ENCODE measurements at regions of chr2 and their contacts with region 1.

Region 1: DNA sequence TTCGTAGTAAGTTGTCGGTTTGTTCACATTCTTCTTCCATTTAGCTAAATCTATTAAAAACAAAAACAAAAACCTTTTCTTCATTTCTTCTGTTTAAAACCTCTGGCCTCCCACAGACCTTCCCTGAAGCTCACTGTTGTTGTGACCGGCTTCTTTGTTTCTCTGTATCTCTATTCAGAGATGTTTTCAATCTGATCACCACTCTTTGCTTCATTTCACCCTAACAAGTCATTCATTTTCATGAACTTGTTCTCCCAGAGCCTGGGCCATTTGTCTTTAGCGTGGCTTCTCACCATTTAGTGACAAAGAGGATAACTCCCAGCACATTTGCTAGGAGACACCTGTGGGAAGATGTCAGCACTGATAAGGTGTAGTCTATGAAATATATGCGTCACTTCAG is 794.2 kb downstream of the ERBB4 start:
- DNase-seq: no peak
- H3K27ac ChIP-seq: no peak overlapping the region
- CTCF ChIP-seq: no peak

Region 2: GRCh38 chr2:211093743-211094303 is 650.6 kb before region 1 on chr2:
- CTCF ChIA-PET with region 1: interaction called, 10 read pairs
- POLR2A ChIA-PET with region 1: no interaction called
- DNase-seq: peak; percentile 19
- H3K27ac ChIP-seq: no peak overlapping the region
- CTCF ChIP-seq: peak; percentile 55